Activated CD8-positive, alpha-beta T cell treated with anti-CD3 and anti-CD28 coated beads, Interleukin-2, amount 10 ng/mL, durations not matched to agents 7 days and 5 days (primary cell): ENCODE measurements at regions of chr5 and their contacts with region 1.

Region 1: DNA sequence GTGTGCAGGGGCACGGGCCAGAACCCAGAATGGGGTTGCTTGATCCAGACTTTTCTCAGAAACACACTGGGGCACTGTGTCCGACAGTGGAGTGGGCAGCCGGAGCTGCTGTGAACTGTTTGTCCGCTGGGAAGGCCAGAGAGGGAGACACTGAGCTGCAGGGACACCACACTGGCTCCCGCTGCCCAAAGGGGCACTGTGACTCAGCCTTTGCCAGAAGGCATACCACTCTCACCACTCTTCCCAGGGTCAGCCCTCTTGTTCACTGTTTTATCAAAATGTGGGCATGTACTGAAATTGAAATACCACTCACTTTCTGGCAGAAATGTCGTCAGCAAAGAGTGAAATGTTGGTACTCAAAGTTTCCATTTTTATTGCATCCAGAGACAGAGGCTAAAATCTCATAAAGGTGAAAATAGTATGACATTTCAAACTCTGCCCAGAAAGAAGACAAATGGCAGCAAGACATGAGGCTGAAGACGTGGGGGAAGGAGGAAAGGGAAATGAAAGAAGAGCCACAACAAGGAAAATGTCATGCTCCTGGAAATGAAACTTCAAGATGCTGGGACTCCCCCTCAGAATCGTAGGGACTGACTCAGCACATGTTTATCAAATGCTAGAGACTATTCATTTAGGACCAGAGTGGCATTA is 4.5 kb upstream of the IL7R start:
- DNase-seq: peak; percentile 49
- ATAC-seq: peak; percentile 6
- H3K4me3 Mint-ChIP-seq: peak overlapping the region; percentile 72
- H3K27ac Mint-ChIP-seq: peak overlapping the region; percentile 94
- H3K4me1 Mint-ChIP-seq: peaks cover 75% of the 10 kb centered on the region
- H3K27me3 Mint-ChIP-seq: no peaks in the 10 kb centered on the region

Region 2: GRCh38 chr5:35785601-35786085 is 66.6 kb before region 1 on chr5:
- CTCF ChIA-PET with region 1: interaction called, 62 read pairs
- POLR2A ChIA-PET with region 1: interaction called, 14 read pairs
- DNase-seq: peak; percentile 40
- ATAC-seq: peak; percentile 81
- H3K4me3 Mint-ChIP-seq: peak overlapping the region; percentile 16
- H3K27ac Mint-ChIP-seq: peak overlapping the region; percentile 68
- H3K4me1 Mint-ChIP-seq: peaks cover 73% of the 10 kb centered on the region
- H3K27me3 Mint-ChIP-seq: no peaks in the 10 kb centered on the region

Region 3: DNA sequence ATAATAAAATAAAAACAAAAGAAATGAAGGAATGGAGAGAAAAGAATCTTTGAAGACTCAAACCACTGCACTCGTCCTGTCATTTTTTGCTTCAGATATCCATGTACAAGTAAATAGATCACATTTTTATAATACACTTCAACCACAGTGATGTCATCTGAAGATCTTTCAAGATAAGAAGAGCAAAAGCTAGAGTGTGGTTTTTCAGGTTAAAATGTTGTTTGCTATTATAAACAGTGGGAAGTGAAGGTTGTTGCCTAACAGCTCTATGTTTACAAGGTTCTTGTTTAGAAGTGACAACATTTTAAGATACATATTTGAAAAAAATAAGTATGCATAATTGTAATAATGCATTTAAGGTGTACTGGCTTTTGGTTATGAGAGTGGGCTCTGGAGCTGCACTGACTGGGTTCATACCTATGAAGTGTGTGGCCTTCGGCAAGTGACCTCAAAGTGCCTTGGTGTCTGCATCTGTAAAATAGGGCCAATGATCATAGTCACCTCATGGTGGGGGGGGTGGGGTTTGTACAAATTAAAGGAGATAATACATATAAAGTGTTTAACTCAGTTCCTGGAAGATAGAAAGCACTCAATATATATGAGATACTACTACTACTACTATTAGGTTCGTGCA is 41.0 kb before region 1 on chr5:
- CTCF ChIA-PET with region 1: interaction called, 4 read pairs
- POLR2A ChIA-PET with region 1: interaction called, 30 read pairs
- DNase-seq: peak; percentile 61
- ATAC-seq: peak; percentile 80
- H3K4me3 Mint-ChIP-seq: peak overlapping the region; percentile 22
- H3K27ac Mint-ChIP-seq: peak overlapping the region; percentile 84
- H3K4me1 Mint-ChIP-seq: peaks cover 39% of the 10 kb centered on the region
- H3K27me3 Mint-ChIP-seq: no peaks in the 10 kb centered on the region

Region 4: GRCh38 chr5:35822511-35822910 is 29.7 kb before region 1 on chr5:
- CTCF ChIA-PET with region 1: interaction called, 44 read pairs
- POLR2A ChIA-PET with region 1: interaction called, 54 read pairs
- DNase-seq: peak; percentile 78
- ATAC-seq: peak; percentile 68
- H3K4me3 Mint-ChIP-seq: peak overlapping the region; percentile 30
- H3K27ac Mint-ChIP-seq: peak overlapping the region; percentile 75
- H3K4me1 Mint-ChIP-seq: peaks cover 85% of the 10 kb centered on the region
- H3K27me3 Mint-ChIP-seq: no peaks in the 10 kb centered on the region

Region 5: DNA sequence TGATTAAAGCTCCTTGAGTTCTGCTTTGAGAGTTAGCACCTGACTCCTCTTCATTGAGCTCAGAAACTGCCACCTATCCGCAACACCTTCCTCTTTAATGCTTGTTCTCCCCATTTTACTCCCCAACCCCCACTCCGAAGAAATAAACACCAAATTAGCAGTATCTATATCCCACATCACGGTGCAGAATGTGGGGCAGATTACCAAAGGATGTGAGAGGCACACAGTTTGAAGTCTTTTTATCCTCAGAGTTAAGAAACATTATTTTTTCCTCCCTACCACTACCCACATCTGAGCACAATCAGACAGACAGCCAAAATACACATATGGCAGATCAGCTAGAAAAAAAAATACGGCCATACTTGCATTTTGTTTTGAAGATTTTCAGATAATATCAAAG is 21.6 kb before region 1 on chr5:
- CTCF ChIA-PET with region 1: interaction called, 44 read pairs
- POLR2A ChIA-PET with region 1: interaction called, 19 read pairs
- DNase-seq: peak; percentile 48
- ATAC-seq: peak; percentile 61
- H3K4me3 Mint-ChIP-seq: peak overlapping the region; percentile 35
- H3K27ac Mint-ChIP-seq: peak overlapping the region; percentile 79
- H3K4me1 Mint-ChIP-seq: peaks cover 83% of the 10 kb centered on the region
- H3K27me3 Mint-ChIP-seq: no peaks in the 10 kb centered on the region

Region 6: DNA sequence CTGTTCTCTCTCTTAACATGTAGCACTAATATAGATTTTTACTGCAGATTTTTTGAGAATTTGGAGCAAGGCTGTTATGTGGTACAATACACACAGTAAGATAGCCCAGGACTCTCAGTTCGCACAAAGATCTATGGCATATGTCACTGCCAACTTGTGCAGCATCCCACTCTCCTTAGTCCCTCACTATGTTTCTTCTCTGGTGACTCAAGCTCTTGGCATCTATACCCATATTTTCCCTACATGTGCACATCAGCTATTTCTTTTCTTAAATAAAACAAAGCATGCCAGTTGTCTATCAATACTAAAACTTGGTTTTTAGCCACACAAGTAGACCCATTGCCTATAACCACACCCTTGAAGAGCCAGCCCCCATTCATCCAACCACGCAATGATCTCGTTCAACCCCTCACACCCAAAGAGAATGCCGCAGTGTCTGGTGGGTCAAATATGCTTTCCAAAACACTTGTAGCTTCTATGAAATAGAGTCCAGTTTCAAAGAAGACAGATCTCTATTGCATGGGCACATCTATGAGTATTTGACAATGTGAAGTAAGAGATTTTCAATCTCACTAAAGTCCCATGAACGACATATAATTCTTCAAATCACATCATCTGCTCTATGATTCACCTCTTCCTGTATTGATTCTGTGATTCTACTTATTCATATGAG is 13.7 kb before region 1 on chr5:
- CTCF ChIA-PET with region 1: interaction called, 21 read pairs
- POLR2A ChIA-PET with region 1: interaction called, 10 read pairs
- DNase-seq: no peak
- ATAC-seq: peak; percentile 38
- H3K4me3 Mint-ChIP-seq: no peak overlapping the region
- H3K27ac Mint-ChIP-seq: peak overlapping the region; percentile 23
- H3K4me1 Mint-ChIP-seq: peaks cover 51% of the 10 kb centered on the region
- H3K27me3 Mint-ChIP-seq: no peaks in the 10 kb centered on the region

Region 7: DNA sequence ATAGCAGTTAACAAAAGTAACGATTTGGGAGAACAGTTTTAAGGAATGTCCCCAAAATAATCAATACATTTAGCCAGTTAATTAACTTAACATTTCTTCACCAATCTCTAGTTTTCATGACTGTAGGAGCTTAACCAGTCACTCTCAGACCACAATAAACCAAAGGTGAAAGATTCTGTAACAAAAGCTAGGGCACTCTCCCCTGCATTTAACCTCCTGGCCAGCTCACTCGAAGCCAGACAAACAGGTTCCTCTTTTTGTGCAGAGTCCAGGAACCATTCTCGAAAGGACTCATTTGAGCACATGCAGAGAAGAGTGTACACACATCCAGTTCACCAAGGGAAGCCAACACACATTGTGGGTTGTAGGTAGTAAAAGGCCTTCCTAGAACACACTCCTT is 10.9 kb after region 1 on chr5:
- CTCF ChIA-PET with region 1: interaction called, 17 read pairs
- POLR2A ChIA-PET with region 1: interaction called, 5 read pairs
- DNase-seq: no peak
- ATAC-seq: peak; percentile 29
- H3K4me3 Mint-ChIP-seq: peak overlapping the region; percentile 41
- H3K27ac Mint-ChIP-seq: peak overlapping the region; percentile 41
- H3K4me1 Mint-ChIP-seq: peaks cover 74% of the 10 kb centered on the region
- H3K27me3 Mint-ChIP-seq: no peaks in the 10 kb centered on the region